Heart left ventricle (tissue), 16 donors: ENCODE measurements at regions of chr10 and their contacts with region 1.

Region 1: DNA sequence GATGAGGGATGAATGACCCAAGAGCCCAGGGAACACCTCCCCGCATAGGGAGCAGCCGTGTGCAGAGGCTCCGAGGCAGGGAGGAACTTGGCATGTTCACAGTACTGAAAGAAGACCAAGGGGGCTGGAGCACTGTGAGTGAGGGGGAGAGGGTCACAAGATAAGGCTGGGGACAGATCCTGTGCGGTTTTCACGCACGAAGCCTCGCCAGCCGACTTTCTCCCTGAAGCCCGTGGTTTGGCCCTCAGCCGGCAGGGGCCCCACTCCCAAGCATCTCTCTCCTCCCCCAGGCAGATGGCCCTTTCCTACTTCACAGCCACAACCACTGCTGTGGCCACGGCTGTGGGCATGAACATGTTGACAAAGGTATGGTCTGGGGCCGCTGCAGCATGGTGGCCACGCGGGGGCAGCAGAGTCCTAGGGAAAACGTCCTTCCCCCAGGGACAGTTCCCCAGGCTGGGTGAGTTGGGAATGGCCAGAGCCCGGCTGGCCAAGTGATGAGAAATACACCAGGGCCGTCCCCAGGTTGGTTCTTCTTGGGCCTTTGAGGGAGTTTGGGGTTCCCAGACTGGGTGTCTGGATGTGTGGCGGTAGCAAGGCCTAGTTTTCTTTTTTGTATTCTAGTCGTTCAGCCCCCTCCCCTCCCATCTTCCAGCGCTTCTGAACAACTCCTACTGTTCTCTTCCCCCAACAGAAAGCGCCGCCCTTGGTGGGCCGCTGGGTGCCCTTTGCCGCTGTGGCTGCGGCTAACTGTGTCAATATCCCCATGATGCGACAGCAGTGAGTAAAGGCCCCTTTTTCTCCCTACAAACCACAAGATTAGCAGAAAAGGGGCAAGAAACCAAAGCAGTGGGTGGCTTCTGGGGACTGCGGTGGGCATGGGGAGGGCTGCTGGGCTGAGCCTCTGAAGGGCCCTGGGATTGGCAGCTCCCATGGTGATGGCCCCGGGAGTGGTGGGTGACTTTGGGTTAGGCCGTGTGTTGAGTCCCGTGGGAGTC is 14.4 kb upstream of the WBP1L start:
- DNase-seq: peak; percentile 85 to 94 (median 88)
- ATAC-seq: peak; percentile 92 to 97 (median 95)
- H3K4me3 ChIP-seq: peak overlapping the region in 1 of 12 donors; percentile 8
- H3K27ac ChIP-seq: no peak overlapping the region
- H3K4me1 ChIP-seq: peaks cover 0 to 20% (median 6%) of the 10 kb centered on the region in 12 donors
- H3K27me3 ChIP-seq: no peaks in the 10 kb centered on the region
- CTCF ChIP-seq: peak; percentile 88 to 97 (median 93)
- POLR2A ChIP-seq: no peak

Region 2: DNA sequence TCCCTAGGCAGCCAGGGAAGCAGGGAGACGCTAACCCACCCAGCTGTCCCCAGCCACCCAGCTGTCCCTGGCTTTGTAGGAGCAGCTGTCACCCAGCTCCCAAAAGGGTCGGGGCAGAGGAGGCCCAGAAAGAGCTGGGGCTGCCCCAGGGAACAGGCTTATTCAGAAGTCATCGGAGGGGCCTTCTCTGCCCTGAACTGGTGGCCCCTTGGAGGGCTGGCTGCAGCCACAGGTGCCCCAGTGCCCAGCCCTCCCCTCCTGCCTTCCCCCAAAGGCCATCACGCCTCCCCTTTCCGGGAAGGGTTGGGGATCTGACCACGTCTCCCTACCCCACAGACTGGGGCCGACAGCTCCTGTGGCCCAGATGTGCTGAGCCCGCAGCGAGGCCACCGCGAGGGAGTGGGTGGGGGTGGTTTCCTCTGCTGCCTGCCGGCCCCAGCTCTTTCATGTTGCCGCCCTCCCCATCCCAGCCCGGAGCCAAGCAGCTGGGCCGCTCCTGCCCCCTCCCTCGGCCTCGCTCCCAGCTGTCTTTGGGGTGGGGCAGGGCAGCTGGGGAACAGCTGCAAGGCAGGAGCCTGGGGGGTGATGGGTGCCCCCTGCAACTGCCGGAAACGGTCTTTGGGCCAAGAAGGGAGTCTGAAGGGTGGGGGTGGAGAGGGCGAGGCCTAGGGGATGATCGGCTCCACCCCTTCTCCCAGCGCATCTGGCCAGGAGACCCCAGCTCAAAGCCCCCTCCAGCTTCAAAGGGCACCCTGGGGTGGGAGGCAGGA is 68.3 kb before region 1 on chr10:
- intact Hi-C with region 1: no loop called
- DNase-seq: peak; percentile 70 to 88 (median 80)
- ATAC-seq: peak; percentile 9 to 84 (median 78)
- H3K4me3 ChIP-seq: peak overlapping the region in 3 of 12 donors; percentile 3 to 25 (median 15)
- H3K27ac ChIP-seq: peak overlapping the region in 10 of 12 donors; percentile 2 to 74 (median 47)
- H3K4me1 ChIP-seq: peaks cover 4 to 48% (median 31%) of the 10 kb centered on the region in 12 donors
- H3K27me3 ChIP-seq: no peaks in the 10 kb centered on the region
- CTCF ChIP-seq: no peak
- POLR2A ChIP-seq: no peak

Region 3: GRCh38 chr10:102815790-102816549 is 86.6 kb after region 1 on chr10:
- intact Hi-C with region 1: loop called in 2 of 10 experiments (anchors 5 to 10 kb)
- DNase-seq: peak in 4 of 5 donors; percentile 63 to 73 (median 69)
- ATAC-seq: peak; percentile 59 to 77 (median 74)
- H3K4me3 ChIP-seq: peak overlapping the region in 4 of 12 donors; percentile 1 to 20 (median 9)
- H3K27ac ChIP-seq: peak overlapping the region; percentile 81 to 98 (median 88)
- H3K4me1 ChIP-seq: peaks cover 6 to 80% (median 42%) of the 10 kb centered on the region in 12 donors
- H3K27me3 ChIP-seq: no peaks in the 10 kb centered on the region
- CTCF ChIP-seq: no peak
- POLR2A ChIP-seq: peak in 1 of 2 donors; percentile 14

Region 4: GRCh38 chr10:102894466-102895213 is 165.3 kb after region 1 on chr10:
- intact Hi-C with region 1: loop called in 1 of 10 experiments (anchors 5 kb)
- DNase-seq: no peak
- ATAC-seq: no peak
- H3K4me3 ChIP-seq: no peak overlapping the region
- H3K27ac ChIP-seq: no peak overlapping the region
- H3K4me1 ChIP-seq: no peaks in the 10 kb centered on the region
- H3K27me3 ChIP-seq: no peaks in the 10 kb centered on the region
- CTCF ChIP-seq: no peak
- POLR2A ChIP-seq: no peak

Region 5: GRCh38 chr10:102904346-102904745 is 175.0 kb after region 1 on chr10:
- intact Hi-C with region 1: loop called (anchors 1 to 5 kb)
- DNase-seq: peak in 1 of 5 donors; percentile 41
- ATAC-seq: peak in 2 of 4 donors; percentile 11 to 50
- H3K4me3 ChIP-seq: no peak overlapping the region
- H3K27ac ChIP-seq: no peak overlapping the region
- H3K4me1 ChIP-seq: no peaks in the 10 kb centered on the region
- H3K27me3 ChIP-seq: no peaks in the 10 kb centered on the region
- CTCF ChIP-seq: no peak
- POLR2A ChIP-seq: no peak

Region 6: DNA sequence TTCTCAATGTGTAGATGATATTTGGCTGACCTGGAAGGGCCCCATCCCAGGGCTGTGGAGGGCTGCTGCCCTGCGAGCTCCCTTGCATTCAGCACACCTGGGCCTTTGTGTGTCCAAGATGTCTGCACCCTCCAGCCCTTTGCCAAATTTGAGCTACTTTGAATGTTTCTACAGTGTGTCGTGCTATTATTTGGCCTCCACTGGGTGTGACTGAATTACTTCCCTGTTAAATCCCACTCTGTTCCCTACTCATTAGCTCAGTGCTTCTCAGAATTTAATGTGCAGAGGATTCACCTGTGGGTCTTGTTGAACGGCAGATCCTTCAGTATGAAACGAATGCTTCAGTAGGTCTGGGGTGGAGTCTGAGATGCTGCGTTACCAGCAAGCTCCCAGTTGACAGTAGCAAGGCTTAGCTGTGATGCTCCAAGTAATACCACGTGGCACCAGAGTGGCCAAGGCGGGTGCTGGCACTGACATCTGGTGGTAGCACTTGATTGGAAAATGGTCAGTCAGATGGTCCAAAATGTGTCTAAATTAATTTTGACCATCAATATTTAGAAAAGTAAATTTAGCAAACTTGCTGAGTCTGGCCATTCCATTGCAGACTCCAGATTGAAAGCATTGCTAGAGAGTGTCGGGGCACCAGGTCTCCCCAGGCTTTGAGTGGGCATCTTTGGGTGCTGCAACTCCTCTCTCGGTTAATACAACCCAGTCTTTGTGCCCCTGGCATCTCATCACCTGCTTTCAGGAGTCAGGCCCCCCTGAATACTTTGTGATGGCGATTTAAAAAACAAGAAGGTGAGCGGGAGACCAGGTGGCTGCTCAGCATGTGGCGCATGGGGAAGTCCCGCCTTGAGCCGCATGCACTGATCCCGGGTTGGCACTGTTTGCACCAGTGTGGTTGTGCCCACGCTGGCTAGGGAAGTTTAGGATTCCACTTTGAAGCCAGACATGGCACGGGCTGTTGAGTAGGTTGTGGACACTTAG is 333.6 kb after region 1 on chr10:
- intact Hi-C with region 1: loop called in 6 of 10 experiments (anchors 5 to 10 kb)
- DNase-seq: no peak
- ATAC-seq: peak in 3 of 4 donors; percentile 57 to 67 (median 67)
- H3K4me3 ChIP-seq: no peak overlapping the region
- H3K27ac ChIP-seq: no peak overlapping the region
- H3K4me1 ChIP-seq: peaks cover 0 to 12% (median 0%) of the 10 kb centered on the region in 12 donors
- H3K27me3 ChIP-seq: no peaks in the 10 kb centered on the region
- CTCF ChIP-seq: peak in 7 of 12 donors; percentile 8 to 48 (median 20)
- POLR2A ChIP-seq: no peak

Region 7: DNA sequence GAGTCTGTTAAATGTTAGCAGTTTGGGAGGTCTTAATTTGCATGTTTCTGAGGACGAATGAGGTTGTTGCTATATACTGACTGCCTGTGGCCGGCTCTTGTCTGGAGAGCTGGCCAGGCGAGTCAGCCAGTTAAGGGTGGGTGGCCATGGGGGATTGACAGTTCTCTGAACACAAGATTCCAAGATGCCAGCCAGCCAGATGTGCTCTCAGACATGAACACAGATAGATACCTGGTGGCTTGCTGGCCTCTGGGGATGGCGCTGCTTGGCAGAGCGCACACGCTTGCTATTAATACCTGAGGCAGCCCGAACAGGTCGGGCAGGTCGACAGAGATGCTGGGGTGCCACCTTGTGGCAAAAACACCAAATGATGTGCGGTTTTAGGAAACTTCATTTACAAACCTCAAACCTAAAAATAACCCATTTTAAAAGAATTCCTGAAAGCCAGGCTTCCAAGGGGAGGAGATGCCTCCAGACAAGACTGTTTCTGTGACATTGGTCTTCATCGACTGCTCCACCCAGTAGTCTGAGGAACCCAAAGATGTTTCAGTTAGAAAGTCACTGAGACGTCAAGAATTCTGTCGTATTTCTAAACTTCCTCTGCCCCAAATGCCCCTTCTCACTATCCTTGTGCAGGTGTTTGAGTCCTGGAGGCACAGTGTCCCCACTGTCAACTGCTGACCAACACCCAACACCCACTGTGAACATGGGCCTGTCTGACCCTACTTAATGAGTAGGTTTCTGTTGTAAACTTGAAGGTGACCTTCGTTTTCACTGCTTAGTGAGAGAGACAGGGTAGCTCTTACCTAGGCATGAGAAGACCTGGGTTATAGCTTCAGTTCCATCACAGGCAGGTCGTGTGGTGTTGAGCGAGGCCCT is 340.4 kb after region 1 on chr10:
- intact Hi-C with region 1: loop called in 6 of 10 experiments (anchors 5 to 10 kb)
- DNase-seq: peak in 4 of 5 donors; percentile 37 to 68 (median 56)
- ATAC-seq: peak; percentile 40 to 84 (median 73)
- H3K4me3 ChIP-seq: no peak overlapping the region
- H3K27ac ChIP-seq: no peak overlapping the region
- H3K4me1 ChIP-seq: peaks cover 0 to 18% (median 0%) of the 10 kb centered on the region in 12 donors
- H3K27me3 ChIP-seq: no peaks in the 10 kb centered on the region
- CTCF ChIP-seq: peak; percentile 47 to 77 (median 64)
- POLR2A ChIP-seq: no peak